PC-9 (cell line): ENCODE measurements at regions of chr7 and their contacts with region 1.

Region 1: GRCh38 chr7:36115448-36116321 is 37.4 kb upstream of the EEPD1 start:
- DNase-seq: peak; percentile 93 to 97
- H3K4me3 ChIP-seq: peak overlapping the region; percentile 2; the same call in 1 of the 2 replicates
- H3K27ac ChIP-seq: peak overlapping the region; percentile 86
- H3K4me1 ChIP-seq: peaks cover 67% of the 10 kb centered on the region
- H3K27me3 ChIP-seq: no peaks in the 10 kb centered on the region
- CTCF ChIP-seq: no peak

Region 2: DNA sequence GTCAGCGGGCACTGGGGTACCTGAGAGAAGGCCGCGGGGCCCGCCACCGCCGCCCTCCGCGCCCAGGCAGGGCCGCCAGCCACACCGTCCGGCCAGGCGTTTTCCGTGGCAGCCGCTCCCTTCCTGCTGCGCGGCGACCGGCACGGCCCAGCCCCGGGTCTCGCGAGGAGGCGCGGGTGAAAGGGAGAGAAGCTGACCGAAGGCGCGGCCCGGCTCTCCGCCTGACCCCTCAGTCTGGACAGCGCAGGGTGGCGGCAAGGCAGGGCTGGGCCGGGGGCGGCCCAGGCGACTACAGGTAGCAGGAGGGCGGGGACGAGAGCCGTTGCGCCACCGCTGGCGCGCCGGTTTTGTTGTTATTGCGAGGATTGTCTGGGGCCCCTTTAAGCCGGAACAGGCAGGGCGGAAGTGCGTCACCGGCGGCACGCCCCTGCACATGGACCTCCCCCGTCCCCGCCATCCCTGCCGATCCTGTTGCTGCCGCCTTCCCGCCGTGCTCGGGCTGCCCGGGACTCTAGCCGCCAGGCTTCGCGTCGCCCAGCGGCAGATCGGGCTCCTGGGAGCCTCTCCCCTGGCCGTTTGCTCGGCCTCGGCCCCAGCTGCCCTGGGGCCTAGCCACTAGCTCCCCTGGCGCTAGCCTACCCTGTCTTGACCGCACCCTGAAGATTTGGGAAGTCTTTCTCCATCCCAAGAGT is 420.8 kb before region 1 on chr7 and contains the start of gene HERPUD2:
- CTCF ChIA-PET with region 1: no interaction called
- POLR2A ChIA-PET with region 1: interaction called, 11 read pairs
- intact Hi-C with region 1: no loop called
- DNase-seq: peak; percentile 92 to 99
- H3K4me3 ChIP-seq: peak within 1 kb of the TSS; percentile 96
- H3K27ac ChIP-seq: peak within 1 kb of the TSS; percentile 77
- H3K4me1 ChIP-seq: peaks cover 61% of the 10 kb centered on the region
- H3K27me3 ChIP-seq: no peaks in the 10 kb centered on the region
- CTCF ChIP-seq: no peak
- total RNA-seq, gene HERPUD2: 33.8 and 53.4 TPM in 2 replicates

Region 3: GRCh38 chr7:35985126-35985754 is 130.4 kb before region 1 on chr7:
- CTCF ChIA-PET with region 1: no interaction called
- POLR2A ChIA-PET with region 1: no interaction called
- intact Hi-C with region 1: loop called (anchors 2 kb)
- DNase-seq: peak; percentile 57 to 84
- H3K4me3 ChIP-seq: no peak overlapping the region
- H3K27ac ChIP-seq: no peak overlapping the region
- H3K4me1 ChIP-seq: peaks cover 18% of the 10 kb centered on the region
- H3K27me3 ChIP-seq: no peaks in the 10 kb centered on the region
- CTCF ChIP-seq: peak; percentile 99

Region 4: GRCh38 chr7:36048141-36048901 is 67.4 kb before region 1 on chr7:
- CTCF ChIA-PET with region 1: no interaction called
- POLR2A ChIA-PET with region 1: interaction called, 3 read pairs
- intact Hi-C with region 1: loop called (anchors 2 kb)
- DNase-seq: peak; percentile 55 to 98
- H3K4me3 ChIP-seq: no peak overlapping the region
- H3K27ac ChIP-seq: peak overlapping the region; percentile 28
- H3K4me1 ChIP-seq: peaks cover 61% of the 10 kb centered on the region
- H3K27me3 ChIP-seq: no peaks in the 10 kb centered on the region
- CTCF ChIP-seq: no peak